ENCODE measurements at regions of chrX and their contacts with region 1.

Region 1: DNA sequence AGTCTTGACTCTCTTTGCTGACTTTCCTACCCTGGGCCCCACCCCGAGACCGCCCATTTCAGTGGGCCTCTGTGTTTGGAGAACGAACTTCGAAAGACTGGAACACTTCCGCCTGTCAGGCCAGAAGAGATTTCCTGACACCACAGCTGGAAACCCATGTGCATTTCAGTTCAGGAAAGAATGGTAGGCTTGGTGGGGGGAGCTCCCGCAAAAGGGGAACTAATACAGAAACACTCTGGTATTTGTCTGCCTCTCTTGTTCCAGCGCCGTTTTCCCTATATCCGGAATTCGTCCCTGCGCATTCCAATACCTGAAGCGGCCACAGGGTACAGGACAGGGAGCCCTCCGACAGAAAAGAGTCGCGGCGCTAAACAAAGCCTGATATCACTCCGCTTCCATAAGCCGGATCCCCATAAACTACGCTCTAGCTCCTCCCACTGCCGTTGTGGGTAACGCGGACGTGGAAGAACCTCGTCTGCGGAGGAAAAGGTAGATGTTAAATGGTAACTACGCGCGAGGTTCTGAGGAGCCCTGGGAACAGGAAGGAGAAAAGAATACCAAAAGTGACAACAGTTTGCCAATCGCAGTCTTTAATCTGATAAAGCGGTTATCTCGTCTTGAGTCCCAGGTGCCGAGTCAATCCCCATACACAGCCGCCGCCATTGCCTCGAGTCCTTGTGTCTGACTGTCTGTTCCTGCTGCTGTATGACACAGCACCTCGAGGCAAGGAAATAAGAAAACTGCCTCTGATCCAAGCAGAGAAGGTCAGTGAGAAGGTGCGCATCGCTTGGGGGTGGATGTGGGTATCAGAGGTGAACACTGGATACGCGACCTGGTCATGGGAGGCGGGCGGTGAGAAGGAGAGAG is at the start of gene ARMCX5:
- DNase-seq: peak; percentile 69 to 85 (median 79)
- H3K4me3 ChIP-seq: peak within 1 kb of the TSS; percentile 61 to 78
- H3K4me3 Mint-ChIP-seq: peak within 1 kb of the TSS; percentile 95 to 99 (median 97)
- H3K27ac ChIP-seq: peak within 1 kb of the TSS; percentile 67
- H3K27ac Mint-ChIP-seq: peak within 1 kb of the TSS; percentile 95 to 99 (median 98)
- H3K4me1 ChIP-seq: peaks cover 20% of the 10 kb centered on the region
- H3K4me1 Mint-ChIP-seq: peaks cover 20 to 53% (median 34%) of the 10 kb centered on the region in 4 donors
- H3K27me3 ChIP-seq: no peaks in the 10 kb centered on the region
- H3K27me3 Mint-ChIP-seq: no peaks in the 10 kb centered on the region
- total RNA-seq, gene ARMCX5: 10.1 to 12.2 TPM

Region 2: DNA sequence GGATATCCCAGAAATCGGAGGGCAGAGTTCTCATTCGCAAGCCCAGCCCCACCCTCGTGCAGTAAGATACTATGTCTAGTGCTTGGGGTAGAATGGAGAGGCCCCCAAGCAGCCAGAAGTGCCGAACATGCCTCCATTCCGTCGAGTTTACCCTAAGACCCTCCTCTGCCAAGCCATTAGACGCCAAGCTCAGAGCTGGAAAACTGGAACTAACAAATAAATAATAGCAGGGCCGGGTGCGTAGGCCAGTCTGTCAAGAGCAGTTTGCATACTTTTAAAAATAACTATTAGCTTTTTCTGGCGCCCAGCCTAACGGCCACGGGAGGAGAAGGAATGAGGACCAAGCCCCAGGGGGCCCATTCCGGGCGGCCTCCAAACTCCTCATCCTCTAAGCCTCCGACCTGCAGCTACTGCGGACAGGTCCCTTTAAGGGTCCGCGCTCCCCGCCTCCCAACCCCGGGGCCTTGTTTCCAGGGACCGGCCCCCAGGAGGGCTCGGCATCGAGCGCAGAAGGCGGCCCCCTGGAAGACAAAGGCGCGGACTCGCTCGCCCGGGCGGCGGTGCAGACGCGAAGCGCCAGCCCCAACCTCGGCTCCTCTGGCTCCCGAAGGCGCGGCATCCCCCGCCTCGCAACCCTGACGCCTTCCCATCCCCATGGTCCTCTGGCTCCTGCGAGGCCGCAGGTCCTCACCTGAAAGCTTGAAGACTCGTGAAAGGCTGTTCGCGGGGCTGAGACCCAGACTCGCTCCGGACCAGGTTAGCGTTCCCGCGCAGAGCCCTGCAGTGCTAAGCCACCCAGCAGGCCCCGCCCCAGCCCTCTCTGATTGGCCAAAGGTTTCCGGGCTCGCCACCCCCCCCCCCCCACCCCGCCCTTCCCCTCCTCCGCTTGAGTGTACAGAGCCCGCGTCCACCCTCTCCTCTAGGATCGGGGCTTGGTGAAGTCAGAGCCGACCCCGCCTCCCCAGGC is 83.1 kb before region 1 on chrX and contains the start of gene TMSB15A:
- CTCF ChIA-PET with region 1: no interaction called
- POLR2A ChIA-PET with region 1: no interaction called
- intact Hi-C with region 1: loop called (anchors 5 kb)
- DNase-seq: peak; percentile 27 to 49 (median 41)
- H3K4me3 ChIP-seq: no peak within 1 kb of the TSS
- H3K4me3 Mint-ChIP-seq: peak within 1 kb of the TSS; percentile 78 to 87 (median 81)
- H3K27ac ChIP-seq: no peak within 1 kb of the TSS
- H3K27ac Mint-ChIP-seq: no peak within 1 kb of the TSS
- H3K4me1 ChIP-seq: peaks cover 5% of the 10 kb centered on the region
- H3K4me1 Mint-ChIP-seq: peaks cover 0 to 7% (median 2%) of the 10 kb centered on the region in 4 donors
- H3K27me3 ChIP-seq: no peaks in the 10 kb centered on the region
- H3K27me3 Mint-ChIP-seq: peaks cover 22 to 27% of the 10 kb centered on the region in 2 donors
- total RNA-seq, gene TMSB15A: not detected

Region 3: DNA sequence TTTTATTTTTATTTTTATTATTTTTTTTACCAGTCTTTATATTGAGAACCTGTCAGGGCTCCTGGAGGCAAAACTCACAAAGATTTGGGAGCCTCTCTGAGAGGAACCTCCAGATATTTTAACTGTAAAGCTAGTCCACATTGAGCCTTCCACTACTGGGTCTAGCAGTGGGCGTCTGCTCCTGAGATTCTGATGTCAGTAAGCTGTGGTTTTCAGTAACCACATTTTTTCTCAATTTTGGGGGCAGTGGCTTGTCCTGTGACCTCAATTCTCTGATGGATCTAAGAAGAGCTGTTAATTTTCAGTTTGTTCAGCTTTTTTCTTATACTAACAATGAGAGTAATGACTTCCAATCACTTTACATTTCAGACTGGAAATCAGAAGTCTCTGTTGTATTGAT is 28.3 kb after region 1 on chrX:
- CTCF ChIA-PET with region 1: no interaction called
- POLR2A ChIA-PET with region 1: no interaction called
- intact Hi-C with region 1: no loop called
- DNase-seq: peak in 1 of 5 donors; percentile 4
- H3K4me3 ChIP-seq: no peak overlapping the region
- H3K4me3 Mint-ChIP-seq: no peak overlapping the region
- H3K27ac ChIP-seq: no peak overlapping the region
- H3K27ac Mint-ChIP-seq: no peak overlapping the region
- H3K4me1 ChIP-seq: no peaks in the 10 kb centered on the region
- H3K4me1 Mint-ChIP-seq: peaks cover 0 to 21% (median 6%) of the 10 kb centered on the region in 4 donors
- H3K27me3 ChIP-seq: no peaks in the 10 kb centered on the region
- H3K27me3 Mint-ChIP-seq: no peaks in the 10 kb centered on the region

Region 4: GRCh38 chrX:102659790-102660757 is 60.8 kb after region 1 on chrX:
- CTCF ChIA-PET with region 1: interaction called, 3 read pairs
- POLR2A ChIA-PET with region 1: interaction called, 9 read pairs
- intact Hi-C with region 1: loop called (anchors 2 kb)
- DNase-seq: peak; percentile 73 to 86 (median 77)
- H3K4me3 ChIP-seq: peak overlapping the region; percentile 11 to 64
- H3K4me3 Mint-ChIP-seq: peak overlapping the region; percentile 86 to 96 (median 90)
- H3K27ac ChIP-seq: peak overlapping the region; percentile 36
- H3K27ac Mint-ChIP-seq: peak overlapping the region; percentile 74 to 97 (median 95)
- H3K4me1 ChIP-seq: peaks cover 5% of the 10 kb centered on the region
- H3K4me1 Mint-ChIP-seq: peaks cover 14 to 39% (median 22%) of the 10 kb centered on the region in 4 donors
- H3K27me3 ChIP-seq: no peaks in the 10 kb centered on the region
- H3K27me3 Mint-ChIP-seq: no peaks in the 10 kb centered on the region

Region 5: GRCh38 chrX:102712952-102713625 is 113.8 kb after region 1 on chrX:
- CTCF ChIA-PET with region 1: no interaction called
- POLR2A ChIA-PET with region 1: no interaction called
- intact Hi-C with region 1: loop called (anchors 1 kb)
- DNase-seq: peak in 1 of 5 donors; percentile 4
- H3K4me3 ChIP-seq: no peak overlapping the region
- H3K4me3 Mint-ChIP-seq: peak overlapping the region; percentile 78 to 88 (median 82)
- H3K27ac ChIP-seq: no peak overlapping the region
- H3K27ac Mint-ChIP-seq: peak overlapping the region in 4 of 7 donors; percentile 27 to 59 (median 43)
- H3K4me1 ChIP-seq: peaks cover 9% of the 10 kb centered on the region
- H3K4me1 Mint-ChIP-seq: peaks cover 13 to 23% (median 15%) of the 10 kb centered on the region in 4 donors
- H3K27me3 ChIP-seq: no peaks in the 10 kb centered on the region
- H3K27me3 Mint-ChIP-seq: peaks cover 10 to 16% of the 10 kb centered on the region in 2 donors

Region 6: DNA sequence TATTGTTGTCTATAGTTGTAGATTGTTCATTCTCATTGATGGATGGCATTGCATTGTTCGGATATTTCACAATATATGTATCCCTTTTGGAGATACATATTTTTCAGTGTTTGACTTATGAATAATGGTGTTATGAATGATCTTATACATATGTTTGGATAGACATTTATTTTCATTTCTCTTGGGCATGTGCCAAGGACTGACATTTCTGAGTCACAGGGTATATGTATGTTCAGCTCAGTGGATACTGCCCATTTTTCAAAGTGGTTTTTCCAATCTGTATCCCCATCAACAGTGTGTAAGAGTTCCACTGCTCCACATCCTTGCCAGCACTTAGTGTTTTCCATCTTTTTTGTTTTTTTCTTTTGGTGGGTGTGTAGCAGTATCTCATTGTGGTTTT is 292.8 kb after region 1 on chrX:
- CTCF ChIA-PET with region 1: no interaction called
- POLR2A ChIA-PET with region 1: no interaction called
- intact Hi-C with region 1: no loop called
- DNase-seq: no peak
- H3K4me3 ChIP-seq: no peak overlapping the region
- H3K4me3 Mint-ChIP-seq: no peak overlapping the region
- H3K27ac ChIP-seq: no peak overlapping the region
- H3K27ac Mint-ChIP-seq: no peak overlapping the region
- H3K4me1 ChIP-seq: no peaks in the 10 kb centered on the region
- H3K4me1 Mint-ChIP-seq: no peaks in the 10 kb centered on the region
- H3K27me3 ChIP-seq: no peaks in the 10 kb centered on the region
- H3K27me3 Mint-ChIP-seq: no peaks in the 10 kb centered on the region